Activated CD4-positive, alpha-beta memory T cell treated with anti-CD3 and anti-CD28 coated beads for 36 hours (primary cell): ENCODE measurements at regions of chr14 and their contacts with region 1.

Region 1: GRCh38 chr14:20873370-20874177 is 17.6 kb upstream of the RNASE3 start:
- DNase-seq: peak; percentile 91
- H3K4me3 Mint-ChIP-seq: peak overlapping the region; percentile 13
- H3K27ac Mint-ChIP-seq: no peak overlapping the region
- H3K4me1 Mint-ChIP-seq: peaks cover 15% of the 10 kb centered on the region
- H3K27me3 Mint-ChIP-seq: no peaks in the 10 kb centered on the region

Region 2: GRCh38 chr14:20697273-20698017 is 176.1 kb before region 1 on chr14:
- CTCF ChIA-PET with region 1: interaction called, 22 read pairs
- POLR2A ChIA-PET with region 1: no interaction called
- intact Hi-C with region 1: loop called (anchors 1 kb)
- DNase-seq: peak; percentile 80
- H3K4me3 Mint-ChIP-seq: no peak overlapping the region
- H3K27ac Mint-ChIP-seq: no peak overlapping the region
- H3K4me1 Mint-ChIP-seq: peaks cover 5% of the 10 kb centered on the region
- H3K27me3 Mint-ChIP-seq: no peaks in the 10 kb centered on the region

Region 3: GRCh38 chr14:20757965-20758364 is 115.6 kb before region 1 on chr14:
- CTCF ChIA-PET with region 1: interaction called, 7 read pairs
- POLR2A ChIA-PET with region 1: no interaction called
- intact Hi-C with region 1: loop called (anchors 1 kb)
- DNase-seq: peak; percentile 51
- H3K4me3 Mint-ChIP-seq: no peak overlapping the region
- H3K27ac Mint-ChIP-seq: no peak overlapping the region
- H3K4me1 Mint-ChIP-seq: no peaks in the 10 kb centered on the region
- H3K27me3 Mint-ChIP-seq: peaks cover 2% of the 10 kb centered on the region

Region 4: DNA sequence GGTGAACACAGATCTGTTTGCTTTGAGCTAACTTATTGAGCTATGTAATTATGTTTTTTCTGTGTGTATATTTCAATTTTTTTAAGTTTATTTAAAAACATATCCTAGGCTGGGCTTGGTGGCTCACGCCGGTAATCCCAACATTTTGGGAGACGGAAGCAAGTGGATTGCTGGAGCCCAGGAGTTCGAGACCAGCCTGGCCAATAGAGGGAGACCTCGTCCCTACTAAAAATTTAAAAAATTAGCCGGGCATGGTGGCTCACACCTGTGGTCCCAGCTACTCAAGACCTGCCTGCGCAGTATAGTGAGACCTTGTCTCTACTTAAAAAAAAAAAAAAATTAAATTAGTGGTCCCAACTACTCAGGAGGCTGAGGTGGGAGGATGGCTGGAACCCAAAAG is 54.7 kb before region 1 on chr14:
- CTCF ChIA-PET with region 1: no interaction called
- POLR2A ChIA-PET with region 1: no interaction called
- intact Hi-C with region 1: no loop called
- DNase-seq: no peak
- H3K4me3 Mint-ChIP-seq: no peak overlapping the region
- H3K27ac Mint-ChIP-seq: no peak overlapping the region
- H3K4me1 Mint-ChIP-seq: peaks cover 6% of the 10 kb centered on the region
- H3K27me3 Mint-ChIP-seq: peaks cover 4% of the 10 kb centered on the region